ENCODE measurements at regions of chr1 and their contacts with region 1.

Region 1: DNA sequence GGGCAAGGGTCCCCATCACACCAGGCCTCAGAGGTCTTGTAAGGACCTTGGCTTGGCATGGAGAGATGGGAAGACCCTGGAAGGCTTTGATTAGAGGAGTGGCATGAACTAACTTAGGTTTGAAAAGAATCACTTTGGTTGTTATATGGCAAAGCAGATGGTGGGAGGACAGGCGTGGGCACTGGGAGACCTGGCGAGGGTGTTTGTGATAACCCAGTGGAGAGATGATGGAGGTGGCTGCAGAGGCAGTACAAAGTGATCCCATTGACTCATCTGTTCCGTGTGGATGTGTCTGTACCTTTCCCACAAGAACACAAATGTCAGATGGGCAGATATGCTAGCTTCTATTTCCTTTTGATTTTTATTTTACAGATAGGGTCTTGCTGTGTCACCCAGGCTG is 168.3 kb downstream of the SLC35F3 start:
- DNase-seq: no peak
- H3K4me3 ChIP-seq: no peak overlapping the region
- H3K4me3 Mint-ChIP-seq: no peak overlapping the region
- H3K27ac Mint-ChIP-seq: no peak overlapping the region
- H3K4me1 ChIP-seq: no peaks in the 10 kb centered on the region
- H3K4me1 Mint-ChIP-seq: no peaks in the 10 kb centered on the region
- H3K27me3 ChIP-seq: no peaks in the 10 kb centered on the region; the same call in 1 of the 2 replicates
- H3K27me3 Mint-ChIP-seq: peaks cover 21% of the 10 kb centered on the region
- CTCF ChIP-seq: no peak

Region 2: GRCh38 chr1:233582439-233582838 is 490.4 kb before region 1 on chr1:
- CTCF ChIA-PET with region 1: interaction called, 11 read pairs
- POLR2A ChIA-PET with region 1: no interaction called
- intact Hi-C with region 1: no loop called
- DNase-seq: no peak
- H3K4me3 ChIP-seq: no peak overlapping the region
- H3K4me3 Mint-ChIP-seq: no peak overlapping the region
- H3K27ac Mint-ChIP-seq: no peak overlapping the region
- H3K4me1 ChIP-seq: no peaks in the 10 kb centered on the region
- H3K4me1 Mint-ChIP-seq: no peaks in the 10 kb centered on the region
- H3K27me3 ChIP-seq: no peaks in the 10 kb centered on the region
- H3K27me3 Mint-ChIP-seq: peaks cover 9% of the 10 kb centered on the region
- CTCF ChIP-seq: no peak